ENCODE measurements at regions of chr2 and their contacts with region 1.

Region 1: DNA sequence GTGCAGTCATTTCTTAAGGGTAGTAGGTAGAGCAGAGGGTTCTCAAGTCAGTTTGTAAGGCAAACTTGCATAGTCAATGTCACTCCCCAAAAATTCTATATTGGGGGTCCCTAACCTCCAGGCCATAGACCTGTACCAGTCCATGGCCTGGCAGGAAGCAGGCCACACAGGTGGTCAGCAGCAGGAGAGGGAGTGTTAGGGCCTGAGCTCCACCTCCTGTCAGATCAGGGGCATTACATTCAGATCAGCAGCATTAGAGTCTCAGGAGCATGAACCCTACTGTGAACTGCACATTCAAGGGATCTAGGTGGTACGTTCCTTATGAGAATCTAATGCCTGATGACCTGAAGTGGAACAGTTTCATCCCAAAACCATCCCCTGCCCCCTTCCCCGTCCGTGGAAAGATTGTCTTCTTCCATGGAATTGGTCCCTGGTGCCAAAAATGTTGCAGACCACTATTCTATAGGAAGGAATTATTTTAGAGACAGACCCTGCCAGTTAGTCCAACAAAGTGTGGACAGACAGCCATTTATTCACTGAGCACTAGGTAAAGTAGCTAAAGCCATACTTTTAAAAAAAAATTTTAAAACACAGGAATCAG is 6.7 kb downstream of the COA5 start:
- DNase-seq: peak in 1 of 2 donors; percentile 39
- ATAC-seq: peak; percentile 76 to 84 (median 77)
- H3K4me3 ChIP-seq: no peak overlapping the region
- H3K27ac ChIP-seq: no peak overlapping the region
- H3K4me1 ChIP-seq: peaks cover 15% of the 10 kb centered on the region
- H3K27me3 ChIP-seq: no peaks in the 10 kb centered on the region
- CTCF ChIP-seq: peak; percentile 54

Region 2: DNA sequence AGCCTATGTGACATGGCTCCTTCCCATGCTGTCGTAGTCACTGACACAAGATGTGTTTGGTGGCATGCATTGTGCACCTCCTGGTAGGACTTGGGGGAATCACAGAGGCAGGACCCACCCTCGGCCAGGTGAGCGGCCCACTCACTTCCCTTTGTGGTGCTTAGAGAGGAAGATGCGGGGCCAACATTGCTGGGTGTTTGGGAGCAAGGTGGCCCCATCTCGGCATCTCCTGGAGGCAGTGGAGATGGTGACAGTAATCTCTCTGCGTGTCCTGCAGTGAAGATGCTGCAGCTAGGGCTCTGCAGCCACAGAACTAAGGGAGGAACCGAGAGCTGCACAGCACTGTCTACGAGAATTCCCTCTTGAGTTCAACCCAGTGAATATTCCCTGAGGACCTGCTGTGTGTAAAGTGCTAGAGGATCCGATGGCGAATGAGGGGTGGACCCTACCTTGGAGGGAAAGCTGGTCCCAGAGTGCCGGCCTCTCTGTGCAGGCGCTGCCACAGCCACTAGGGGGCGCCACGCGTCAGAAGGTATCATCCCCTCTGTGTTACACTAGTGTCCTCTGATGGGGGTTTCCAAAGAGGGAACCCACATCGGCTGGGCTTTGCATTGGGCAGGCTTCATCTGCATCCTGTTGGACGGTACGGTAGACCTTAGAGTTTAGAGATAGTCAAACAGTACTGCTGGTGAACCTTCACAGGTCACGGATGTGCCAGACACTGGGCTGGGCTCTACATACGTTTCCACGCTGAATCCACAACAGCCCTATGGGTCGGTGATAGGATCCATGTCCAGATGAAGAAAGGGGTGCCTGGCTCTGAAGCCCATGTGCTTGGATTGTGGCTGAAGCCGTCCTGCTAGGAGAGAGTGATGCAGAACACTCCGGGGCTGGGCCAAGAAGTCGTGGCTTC is 32.5 kb before region 1 on chr2:
- intact Hi-C with region 1: loop called in 1 of 2 experiments (anchors 5 kb)
- DNase-seq: peak in 1 of 2 donors; percentile 39
- ATAC-seq: peak in 3 of 4 donors; percentile 44 to 63 (median 56)
- H3K4me3 ChIP-seq: no peak overlapping the region
- H3K27ac ChIP-seq: no peak overlapping the region
- H3K4me1 ChIP-seq: no peaks in the 10 kb centered on the region
- H3K27me3 ChIP-seq: no peaks in the 10 kb centered on the region
- CTCF ChIP-seq: peak; percentile 75

Measured in psoas muscle (tissue), 8 donors.